Heart right ventricle (tissue), 16 donors: ENCODE measurements at regions of chr16 and their contacts with region 1.

Region 1: DNA sequence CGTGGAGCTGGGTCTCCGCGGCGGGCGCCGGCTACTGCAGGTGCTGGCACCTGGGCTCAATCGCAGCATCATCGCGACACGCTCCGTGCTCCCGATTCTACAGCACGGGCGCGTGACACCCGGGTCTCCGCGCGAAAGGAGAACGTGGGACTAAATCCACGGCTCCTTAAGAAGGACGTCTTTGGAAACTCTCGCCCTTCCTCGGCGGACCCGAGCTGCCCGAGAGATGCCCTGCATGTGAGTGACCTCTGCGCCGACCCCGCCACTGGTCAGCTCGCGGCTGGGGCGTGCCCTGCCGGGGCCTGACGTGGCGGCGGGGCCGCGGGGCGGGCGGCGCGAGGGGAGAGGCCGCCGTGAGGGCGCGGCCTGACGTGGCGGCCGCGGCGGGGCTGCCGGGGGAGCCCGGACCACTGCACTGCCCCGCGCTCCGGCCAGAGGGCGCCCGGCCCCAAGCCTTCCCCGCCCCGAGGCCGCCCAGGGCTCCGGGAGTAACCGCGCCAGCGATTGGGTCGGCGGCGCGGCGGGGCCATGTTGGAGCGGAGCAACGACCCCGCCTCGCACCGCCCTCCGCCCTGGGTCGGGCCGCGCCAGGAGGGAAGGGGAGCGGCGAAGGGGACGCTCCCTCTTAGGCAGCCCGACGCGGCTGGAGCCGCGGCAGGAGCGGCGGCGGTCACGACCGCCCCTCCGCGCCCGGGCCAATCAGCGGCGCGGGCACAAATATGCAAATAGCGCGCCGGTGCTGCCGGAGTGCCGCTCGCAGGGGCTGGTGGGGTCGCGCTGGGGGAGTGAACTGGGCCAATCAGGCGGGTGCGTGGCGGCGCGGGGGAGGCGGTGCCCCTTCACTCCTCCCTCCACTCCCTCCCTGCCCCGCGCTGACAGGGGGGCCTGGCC is 75.6 kb downstream of the CHD9 start:
- DNase-seq: peak; percentile 97 to 98
- ATAC-seq: peak; percentile 92 to 97 (median 95)
- H3K4me3 ChIP-seq: peak overlapping the region; percentile 68 to 94 (median 84)
- H3K27ac ChIP-seq: peak overlapping the region; percentile 89 to 99 (median 96)
- H3K4me1 ChIP-seq: peaks cover 0 to 54% (median 36%) of the 10 kb centered on the region in 9 donors
- H3K27me3 ChIP-seq: no peaks in the 10 kb centered on the region
- CTCF ChIP-seq: peak; percentile 49 to 87 (median 72)

Region 2: GRCh38 chr16:52861614-52862022 is 268.8 kb before region 1 on chr16:
- intact Hi-C with region 1: no loop called
- DNase-seq: no peak
- ATAC-seq: no peak
- H3K4me3 ChIP-seq: no peak overlapping the region
- H3K27ac ChIP-seq: no peak overlapping the region
- H3K4me1 ChIP-seq: no peaks in the 10 kb centered on the region
- H3K27me3 ChIP-seq: peaks cover 0 to under 1% (median 0%) of the 10 kb centered on the region in 7 donors
- CTCF ChIP-seq: peak in 1 of 9 donors; percentile 7

Region 3: GRCh38 chr16:53091466-53092211 is 38.8 kb before region 1 on chr16:
- intact Hi-C with region 1: loop called in 4 of 10 experiments (anchors 2 to 5 kb)
- DNase-seq: peak; percentile 60 to 71
- ATAC-seq: peak; percentile 24 to 59 (median 45)
- H3K4me3 ChIP-seq: peak overlapping the region in 1 of 10 donors; percentile 5
- H3K27ac ChIP-seq: peak overlapping the region; percentile 77 to 97 (median 86)
- H3K4me1 ChIP-seq: peaks cover 35 to 78% (median 64%) of the 10 kb centered on the region in 9 donors
- H3K27me3 ChIP-seq: no peaks in the 10 kb centered on the region
- CTCF ChIP-seq: no peak

Region 4: GRCh38 chr16:53099318-53100130 is 30.9 kb before region 1 on chr16:
- intact Hi-C with region 1: loop called in 7 of 10 experiments (anchors 1 to 5 kb)
- DNase-seq: peak; percentile 93 to 94
- ATAC-seq: peak; percentile 91 to 96 (median 92)
- H3K4me3 ChIP-seq: peak overlapping the region in 9 of 10 donors; percentile 14 to 58 (median 46)
- H3K27ac ChIP-seq: peak overlapping the region; percentile 86 to 99 (median 95)
- H3K4me1 ChIP-seq: peaks cover 16 to 82% (median 48%) of the 10 kb centered on the region in 9 donors
- H3K27me3 ChIP-seq: no peaks in the 10 kb centered on the region
- CTCF ChIP-seq: no peak

Region 5: GRCh38 chr16:53207810-53208752 is 77.7 kb after region 1 on chr16:
- intact Hi-C with region 1: loop called in 8 of 10 experiments (anchors 1 to 10 kb)
- DNase-seq: peak in 1 of 2 donors; percentile 64
- ATAC-seq: peak; percentile 94 to 96 (median 96)
- H3K4me3 ChIP-seq: peak overlapping the region; percentile 5 to 64 (median 53)
- H3K27ac ChIP-seq: peak overlapping the region; percentile 26 to 94 (median 86)
- H3K4me1 ChIP-seq: peaks cover 0 to 65% (median 56%) of the 10 kb centered on the region in 9 donors
- H3K27me3 ChIP-seq: no peaks in the 10 kb centered on the region
- CTCF ChIP-seq: peak; percentile 14 to 80 (median 60)

Region 6: DNA sequence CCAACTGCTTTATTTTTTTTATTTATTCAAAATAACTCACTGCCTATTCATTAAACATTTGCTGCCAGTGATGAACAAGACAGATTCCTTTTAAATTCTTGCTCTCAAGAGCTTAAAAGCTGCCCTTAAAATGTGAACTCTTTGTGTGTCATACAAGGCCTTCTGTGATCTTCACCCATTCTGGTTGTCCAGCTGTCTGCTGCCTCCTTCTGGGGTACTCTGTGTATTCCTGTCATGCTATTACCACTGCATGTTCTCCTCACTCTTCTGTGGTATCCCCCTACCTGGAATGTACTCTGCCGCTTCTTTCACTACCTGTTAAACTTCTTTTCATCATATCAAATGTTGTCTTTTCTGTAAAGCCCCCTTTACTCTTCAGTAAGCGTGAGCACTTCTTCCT is 90.2 kb after region 1 on chr16:
- intact Hi-C with region 1: loop called in 2 of 10 experiments (anchors 5 to 10 kb)
- DNase-seq: peak in 1 of 2 donors; percentile 10
- ATAC-seq: peak in 7 of 8 donors; percentile 54 to 79 (median 65)
- H3K4me3 ChIP-seq: peak overlapping the region in 1 of 10 donors; percentile 15
- H3K27ac ChIP-seq: peak overlapping the region in 9 of 10 donors; percentile 33 to 87 (median 70)
- H3K4me1 ChIP-seq: peaks cover 8 to 82% (median 66%) of the 10 kb centered on the region in 9 donors
- H3K27me3 ChIP-seq: no peaks in the 10 kb centered on the region
- CTCF ChIP-seq: peak in 8 of 9 donors; percentile 9 to 59 (median 35)

Region 7: GRCh38 chr16:53282975-53283946 is 152.9 kb after region 1 on chr16:
- intact Hi-C with region 1: loop called in 1 of 10 experiments (anchors 5 kb)
- DNase-seq: no peak
- ATAC-seq: peak in 1 of 8 donors; percentile 27
- H3K4me3 ChIP-seq: no peak overlapping the region
- H3K27ac ChIP-seq: peak overlapping the region in 1 of 10 donors; percentile 21
- H3K4me1 ChIP-seq: peaks cover 0 to 14% (median 6%) of the 10 kb centered on the region in 9 donors
- H3K27me3 ChIP-seq: no peaks in the 10 kb centered on the region
- CTCF ChIP-seq: peak in 7 of 9 donors; percentile 37 to 63 (median 53)